ENCODE measurements at regions of chr4 and their contacts with region 1.

Region 1: GRCh38 chr4:83503974-83504373 is 19.1 kb upstream of the ABRAXAS1 start:
- DNase-seq: no peak
- ATAC-seq: no peak
- H3K4me3 ChIP-seq: no peak overlapping the region
- H3K27ac ChIP-seq: no peak overlapping the region
- H3K4me1 ChIP-seq: no peaks in the 10 kb centered on the region
- H3K27me3 ChIP-seq: no peaks in the 10 kb centered on the region
- CTCF ChIP-seq: no peak
- POLR2A ChIP-seq: no peak

Region 2: GRCh38 chr4:83639849-83640493 is 136.0 kb after region 1 on chr4:
- intact Hi-C with region 1: loop called (anchors 5 to 10 kb)
- DNase-seq: peak in 1 of 3 donors; percentile 59
- ATAC-seq: peak; percentile 94 to 97 (median 95)
- H3K4me3 ChIP-seq: no peak overlapping the region
- H3K27ac ChIP-seq: no peak overlapping the region
- H3K4me1 ChIP-seq: no peaks in the 10 kb centered on the region
- H3K27me3 ChIP-seq: no peaks in the 10 kb centered on the region
- CTCF ChIP-seq: peak; percentile 80 to 93 (median 84)
- POLR2A ChIP-seq: no peak

Region 3: DNA sequence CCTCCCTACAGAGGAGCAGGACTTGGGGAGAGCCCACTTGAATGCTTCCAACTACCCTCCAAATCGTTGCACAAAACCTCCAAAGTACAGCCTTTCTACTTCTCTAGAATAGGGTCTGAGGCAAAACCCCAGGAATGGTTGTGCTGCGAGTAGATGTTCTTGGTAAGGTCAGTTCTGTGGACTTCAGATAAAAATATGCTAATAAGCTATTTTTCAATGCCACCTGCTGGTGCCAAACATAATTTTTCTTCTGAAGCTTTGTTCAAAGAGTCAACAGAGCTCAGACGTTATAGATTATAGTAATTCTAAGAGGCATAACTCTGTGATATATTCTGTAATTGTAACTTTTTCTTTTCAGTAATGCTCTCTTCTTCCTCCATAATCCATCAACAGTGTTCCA is 457.6 kb after region 1 on chr4:
- intact Hi-C with region 1: no loop called
- DNase-seq: no peak
- ATAC-seq: no peak
- H3K4me3 ChIP-seq: no peak overlapping the region
- H3K27ac ChIP-seq: no peak overlapping the region
- H3K4me1 ChIP-seq: no peaks in the 10 kb centered on the region
- H3K27me3 ChIP-seq: no peaks in the 10 kb centered on the region
- CTCF ChIP-seq: no peak
- POLR2A ChIP-seq: no peak